Activated T-helper 1 cell treated with anti-CD3 and anti-CD28 coated beads, Interleukin-12 subunit alpha, Interleukin-12 subunit beta, Interleukin-2, Interleukin-4 antibody, amounts not matched to agents 30 ng/mL and 10 ng/mL and 1 ng/mL, durations not matched to agents 14 hours and 24 hours and 36 hours (primary cell): ENCODE measurements at regions of chr6 and their contacts with region 1.

Region 1: GRCh38 chr6:152301764-152302568 is 335.2 kb downstream of the SYNE1 start:
- DNase-seq: peak; percentile 88
- H3K4me3 Mint-ChIP-seq: peak overlapping the region; percentile 98
- H3K27ac Mint-ChIP-seq: peak overlapping the region; percentile 99
- H3K4me1 Mint-ChIP-seq: peaks cover 41% of the 10 kb centered on the region
- H3K27me3 Mint-ChIP-seq: peaks cover 4% of the 10 kb centered on the region

Region 2: GRCh38 chr6:152246554-152247337 is 55.2 kb before region 1 on chr6:
- intact Hi-C with region 1: no loop called
- DNase-seq: no peak
- H3K4me3 Mint-ChIP-seq: no peak overlapping the region
- H3K27ac Mint-ChIP-seq: no peak overlapping the region
- H3K4me1 Mint-ChIP-seq: no peaks in the 10 kb centered on the region
- H3K27me3 Mint-ChIP-seq: no peaks in the 10 kb centered on the region

Region 3: GRCh38 chr6:152316024-152316423 is 14.1 kb after region 1 on chr6:
- intact Hi-C with region 1: no loop called
- DNase-seq: no peak
- H3K4me3 Mint-ChIP-seq: no peak overlapping the region
- H3K27ac Mint-ChIP-seq: no peak overlapping the region
- H3K4me1 Mint-ChIP-seq: no peaks in the 10 kb centered on the region
- H3K27me3 Mint-ChIP-seq: peaks cover 31% of the 10 kb centered on the region

Region 4: DNA sequence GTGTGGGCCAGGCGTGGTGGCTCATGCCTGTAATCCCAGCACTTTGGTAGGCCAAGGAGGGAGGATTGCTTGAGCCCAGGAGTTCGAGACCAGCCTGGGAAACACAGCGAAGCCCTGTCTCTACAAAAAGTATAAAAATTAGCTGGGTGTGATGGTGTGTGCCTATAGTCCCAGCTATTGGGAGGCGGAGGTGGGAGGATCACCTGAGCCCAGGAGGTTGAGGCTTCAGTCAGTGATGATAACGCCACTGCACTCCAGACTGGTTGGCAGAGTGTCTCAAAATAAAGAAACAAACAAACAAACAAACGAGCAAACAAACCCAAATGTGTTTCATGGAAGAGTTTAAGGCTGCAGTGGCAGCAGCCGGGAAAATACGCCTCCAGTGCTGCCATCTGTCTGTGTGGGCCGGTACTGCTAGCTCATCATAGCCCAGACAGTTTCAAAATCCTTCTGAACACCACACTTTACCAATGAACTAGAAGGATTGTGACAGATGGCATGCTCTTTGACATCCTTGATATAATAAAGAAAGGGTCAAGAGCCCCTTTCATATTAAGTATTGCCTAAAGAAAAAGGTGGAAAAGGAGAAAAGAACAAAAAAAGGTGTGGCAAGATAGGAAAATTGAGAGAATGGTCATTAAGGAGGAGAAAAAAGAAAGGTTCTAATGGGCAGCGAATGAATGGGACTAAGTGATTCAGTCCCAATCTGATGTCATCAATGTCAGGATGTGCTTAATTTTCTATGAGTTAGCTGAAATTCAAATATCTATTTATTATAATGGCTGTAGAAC is 36.6 kb after region 1 on chr6:
- intact Hi-C with region 1: loop called (anchors 1 kb)
- DNase-seq: peak; percentile 13
- H3K4me3 Mint-ChIP-seq: no peak overlapping the region
- H3K27ac Mint-ChIP-seq: no peak overlapping the region
- H3K4me1 Mint-ChIP-seq: peaks cover 6% of the 10 kb centered on the region
- H3K27me3 Mint-ChIP-seq: peaks cover 18% of the 10 kb centered on the region

Region 5: DNA sequence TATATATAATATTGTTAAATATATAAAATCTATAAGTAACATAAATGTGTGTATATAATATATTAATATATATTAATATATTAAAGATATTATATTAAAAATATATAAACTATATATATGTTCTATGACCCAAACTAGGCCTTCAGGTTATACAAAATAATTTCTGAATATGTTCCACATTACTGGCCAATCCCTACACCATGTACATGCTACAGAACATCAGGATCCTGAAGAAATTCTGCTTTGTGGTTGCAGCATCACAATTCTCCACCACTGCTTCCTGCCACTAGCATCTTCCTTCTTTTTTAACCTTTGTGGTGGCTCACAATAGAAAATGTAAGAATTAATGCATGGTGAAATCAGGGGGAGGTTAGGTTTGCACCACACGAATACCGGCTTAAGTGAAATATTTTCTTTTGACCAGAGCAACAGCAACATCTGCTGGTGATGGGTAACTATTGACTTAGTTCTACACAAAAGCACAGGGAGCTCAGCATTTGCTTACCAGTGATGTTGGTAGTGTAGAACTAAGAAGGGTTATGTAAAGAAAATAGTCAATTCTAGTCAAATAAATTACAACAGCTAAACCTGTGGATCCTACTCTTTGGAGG is 54.6 kb after region 1 on chr6:
- intact Hi-C with region 1: loop called (anchors 1 kb)
- DNase-seq: no peak
- H3K4me3 Mint-ChIP-seq: no peak overlapping the region
- H3K27ac Mint-ChIP-seq: no peak overlapping the region
- H3K4me1 Mint-ChIP-seq: no peaks in the 10 kb centered on the region
- H3K27me3 Mint-ChIP-seq: no peaks in the 10 kb centered on the region

Region 6: DNA sequence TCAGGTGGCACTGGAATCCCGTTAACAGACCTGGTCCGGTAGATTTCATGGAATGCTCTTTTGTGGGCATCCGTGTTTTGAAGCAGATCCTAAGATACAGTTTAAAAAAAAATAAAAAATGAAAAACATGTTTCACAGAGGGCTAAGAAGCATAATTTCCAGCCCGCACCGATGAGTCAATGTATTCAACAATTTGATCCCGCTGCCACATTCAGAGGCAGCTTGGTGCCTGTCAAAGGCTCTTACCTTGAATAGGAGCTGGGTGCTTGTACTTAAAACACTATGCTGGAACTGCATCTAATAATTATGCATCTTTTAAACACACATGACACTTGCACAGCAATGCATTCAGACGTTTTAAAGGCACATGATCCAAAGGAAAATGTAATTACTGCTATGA is 170.4 kb after region 1 on chr6:
- intact Hi-C with region 1: no loop called
- DNase-seq: no peak
- H3K4me3 Mint-ChIP-seq: no peak overlapping the region
- H3K27ac Mint-ChIP-seq: no peak overlapping the region
- H3K4me1 Mint-ChIP-seq: no peaks in the 10 kb centered on the region
- H3K27me3 Mint-ChIP-seq: no peaks in the 10 kb centered on the region

Region 7: GRCh38 chr6:152982768-152983636 is 681.0 kb after region 1 on chr6 and contains the start of gene FBXO5:
- intact Hi-C with region 1: loop called (anchors 5 kb)
- DNase-seq: peak; percentile 98
- H3K4me3 Mint-ChIP-seq: peak within 1 kb of the TSS; percentile 96
- H3K27ac Mint-ChIP-seq: peak within 1 kb of the TSS; percentile 100
- H3K4me1 Mint-ChIP-seq: peaks cover 53% of the 10 kb centered on the region
- H3K27me3 Mint-ChIP-seq: no peaks in the 10 kb centered on the region
- total RNA-seq, gene FBXO5: 29.4 and 33.2 TPM in 2 replicates